ENCODE measurements at regions of chr6 and their contacts with region 1.

Region 1: GRCh38 chr6:4775584-4776494 is at the start of gene CDYL:
- DNase-seq: peak; percentile 38 to 93
- H3K4me3 ChIP-seq: peak within 1 kb of the TSS; percentile 93 to 97
- H3K27ac ChIP-seq: peak within 1 kb of the TSS; percentile 75 to 95
- H3K4me1 ChIP-seq: peaks cover 5 to 9% of the 10 kb centered on the region in 2 donors
- H3K27me3 ChIP-seq: no peaks in the 10 kb centered on the region
- CTCF ChIP-seq: peak in 2 of 3 experiments; percentile 12 to 33
- total RNA-seq, gene CDYL: 73.7 TPM

Region 2: GRCh38 chr6:4018172-4018905 is 757.5 kb before region 1 on chr6:
- intact Hi-C with region 1: loop called (anchors 2 kb)
- DNase-seq: peak; percentile 81 to 96
- H3K4me3 ChIP-seq: peak overlapping the region; percentile 78 to 81
- H3K27ac ChIP-seq: peak overlapping the region; percentile 97 to 99
- H3K4me1 ChIP-seq: peaks cover 7 to 36% of the 10 kb centered on the region in 2 donors
- H3K27me3 ChIP-seq: no peaks in the 10 kb centered on the region
- CTCF ChIP-seq: peak; percentile 43 to 48 (median 43)

Region 3: DNA sequence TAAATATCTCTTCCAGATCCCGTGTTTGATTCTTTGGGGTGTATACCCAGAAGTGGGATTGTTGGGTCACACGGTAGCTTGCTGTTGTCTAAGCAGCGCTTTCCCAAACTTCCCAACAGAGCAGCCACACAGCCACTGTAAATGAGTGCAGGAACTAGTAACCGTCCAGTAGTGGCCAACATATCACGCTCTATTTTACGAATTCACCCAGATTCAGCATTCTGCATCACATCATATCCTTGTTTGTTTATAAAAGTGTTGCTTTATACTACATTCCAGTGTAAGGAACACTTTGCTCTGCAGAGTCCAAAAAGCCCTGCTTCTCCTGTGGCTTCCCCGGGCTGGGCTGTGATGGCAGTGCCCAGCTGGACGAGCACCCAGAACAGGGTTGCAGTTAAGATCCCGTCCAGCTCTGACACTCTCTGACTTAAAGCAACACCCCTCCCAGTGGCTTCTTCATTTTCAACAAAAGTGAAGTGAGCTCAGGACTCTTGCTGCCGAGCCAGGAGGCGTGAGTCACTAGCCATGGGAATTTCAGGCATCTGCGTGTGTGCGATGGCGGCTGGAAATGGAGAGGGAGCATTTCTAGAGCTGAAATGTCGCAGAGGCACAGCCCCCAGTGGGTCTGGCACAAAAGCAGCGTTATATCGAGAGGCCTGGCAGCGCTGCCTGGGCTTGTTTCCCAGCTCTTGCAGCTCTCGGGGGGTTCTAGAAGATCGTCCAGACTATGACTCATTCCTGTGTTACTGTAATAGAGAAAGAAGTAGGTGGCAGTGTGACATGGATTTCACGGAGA is 424.1 kb before region 1 on chr6:
- intact Hi-C with region 1: loop called (anchors 5 kb)
- DNase-seq: peak; percentile 26 to 90
- H3K4me3 ChIP-seq: peak overlapping the region; percentile 27 to 35
- H3K27ac ChIP-seq: peak overlapping the region; percentile 45 to 58
- H3K4me1 ChIP-seq: peaks cover 6 to 8% of the 10 kb centered on the region in 2 donors
- H3K27me3 ChIP-seq: no peaks in the 10 kb centered on the region
- CTCF ChIP-seq: no peak

Region 4: GRCh38 chr6:4606821-4607704 is 168.8 kb before region 1 on chr6:
- intact Hi-C with region 1: loop called (anchors 5 kb)
- DNase-seq: peak in 1 of 2 donors; percentile 72
- H3K4me3 ChIP-seq: peak overlapping the region; percentile 29
- H3K27ac ChIP-seq: peak overlapping the region; percentile 55 to 61
- H3K4me1 ChIP-seq: peaks cover 0 to 17% of the 10 kb centered on the region in 2 donors
- H3K27me3 ChIP-seq: no peaks in the 10 kb centered on the region
- CTCF ChIP-seq: no peak

Region 5: DNA sequence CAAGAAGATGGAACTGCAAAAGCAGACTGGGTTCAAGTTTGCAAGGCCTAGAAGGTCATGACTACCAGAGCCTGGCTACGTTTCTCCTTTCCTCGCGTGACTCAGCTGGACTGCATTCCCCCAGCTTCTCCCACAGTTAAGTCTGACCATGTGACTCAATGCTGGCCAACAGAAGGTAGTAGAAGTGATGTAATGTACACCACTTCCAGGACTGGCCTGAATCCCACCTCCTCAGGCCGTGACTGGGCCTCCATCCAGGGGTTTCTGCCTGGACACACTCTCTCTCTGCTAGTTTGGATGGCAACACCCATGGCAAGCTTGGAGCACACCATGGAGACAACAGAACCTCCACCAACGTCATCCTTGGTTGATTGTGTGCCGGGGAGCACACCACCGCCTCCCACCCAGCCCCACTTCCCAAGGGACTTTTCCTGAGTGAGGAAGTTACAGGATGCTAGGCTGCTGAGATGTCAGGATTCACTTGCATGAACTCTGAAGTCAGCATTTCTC is 111.7 kb before region 1 on chr6:
- intact Hi-C with region 1: loop called (anchors 5 kb)
- DNase-seq: peak; percentile 58 to 88
- H3K4me3 ChIP-seq: no peak overlapping the region
- H3K27ac ChIP-seq: peak overlapping the region; percentile 31 to 41
- H3K4me1 ChIP-seq: peaks cover 0 to 2% of the 10 kb centered on the region in 2 donors
- H3K27me3 ChIP-seq: no peaks in the 10 kb centered on the region
- CTCF ChIP-seq: no peak

Measured in ascending aorta (tissue), 2 donors.